ENCODE measurements at regions of chr16 and their contacts with region 1.

Region 1: GRCh38 chr16:58629572-58630104 is at the start of gene CNOT1:
- DNase-seq: peak; percentile 99
- H3K4me3 Mint-ChIP-seq: peak within 1 kb of the TSS; percentile 95
- H3K27ac Mint-ChIP-seq: peak within 1 kb of the TSS; percentile 100
- H3K4me1 Mint-ChIP-seq: peaks cover 25% of the 10 kb centered on the region
- H3K27me3 Mint-ChIP-seq: no peaks in the 10 kb centered on the region
- total RNA-seq, gene CNOT1: 264 and 266 TPM in 2 replicates

Region 2: DNA sequence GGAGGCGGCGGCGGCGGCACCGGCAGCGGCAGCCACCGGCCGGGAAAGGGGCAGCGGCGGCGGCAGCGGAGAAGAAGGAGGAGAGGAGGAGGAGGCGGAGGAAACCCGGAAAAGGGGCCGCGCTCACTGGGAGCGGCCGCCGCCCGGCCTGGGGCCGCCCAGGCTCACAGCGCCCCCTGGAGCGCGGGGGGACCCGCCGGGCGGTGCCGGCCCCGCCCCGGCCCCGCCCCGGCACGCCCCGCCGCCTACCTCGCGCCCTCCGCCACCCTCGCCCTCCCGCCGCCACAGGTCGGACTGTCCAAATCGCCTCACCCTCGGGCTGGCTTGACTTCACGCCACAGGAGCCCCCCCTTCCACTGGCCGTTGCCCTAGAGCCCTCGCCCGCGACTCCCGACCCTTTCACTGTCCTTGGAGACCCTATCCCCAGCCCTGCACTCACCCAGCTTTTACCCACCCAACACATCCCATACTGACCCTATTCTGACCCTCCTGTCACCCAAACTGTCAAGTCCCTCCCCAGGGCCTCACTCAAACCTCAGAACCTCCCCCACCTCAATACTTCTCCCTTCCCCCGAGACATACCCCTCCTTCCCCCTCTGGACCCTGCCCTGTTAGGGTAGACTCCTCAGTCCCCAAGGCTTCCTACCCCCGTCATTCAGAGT is 431.5 kb before region 1 on chr16 and contains the start of gene CSNK2A2:
- intact Hi-C with region 1: loop called (anchors 5 kb)
- DNase-seq: peak; percentile 63
- H3K4me3 Mint-ChIP-seq: peak within 1 kb of the TSS; percentile 84
- H3K27ac Mint-ChIP-seq: peak within 1 kb of the TSS; percentile 54
- H3K4me1 Mint-ChIP-seq: peaks cover 34% of the 10 kb centered on the region
- H3K27me3 Mint-ChIP-seq: peaks cover 12% of the 10 kb centered on the region
- total RNA-seq, gene CSNK2A2: 90.5 and 93.9 TPM in 2 replicates

Region 3: GRCh38 chr16:58392215-58393137 is 237.2 kb before region 1 on chr16 and contains the start of gene GINS3:
- intact Hi-C with region 1: loop called (anchors 1 kb)
- DNase-seq: peak; percentile 83
- H3K4me3 Mint-ChIP-seq: peak within 1 kb of the TSS; percentile 99
- H3K27ac Mint-ChIP-seq: peak within 1 kb of the TSS; percentile 96
- H3K4me1 Mint-ChIP-seq: peaks cover 13% of the 10 kb centered on the region
- H3K27me3 Mint-ChIP-seq: peaks cover 22% of the 10 kb centered on the region
- total RNA-seq, gene GINS3: 21.0 and 22.2 TPM in 2 replicates

Region 4: DNA sequence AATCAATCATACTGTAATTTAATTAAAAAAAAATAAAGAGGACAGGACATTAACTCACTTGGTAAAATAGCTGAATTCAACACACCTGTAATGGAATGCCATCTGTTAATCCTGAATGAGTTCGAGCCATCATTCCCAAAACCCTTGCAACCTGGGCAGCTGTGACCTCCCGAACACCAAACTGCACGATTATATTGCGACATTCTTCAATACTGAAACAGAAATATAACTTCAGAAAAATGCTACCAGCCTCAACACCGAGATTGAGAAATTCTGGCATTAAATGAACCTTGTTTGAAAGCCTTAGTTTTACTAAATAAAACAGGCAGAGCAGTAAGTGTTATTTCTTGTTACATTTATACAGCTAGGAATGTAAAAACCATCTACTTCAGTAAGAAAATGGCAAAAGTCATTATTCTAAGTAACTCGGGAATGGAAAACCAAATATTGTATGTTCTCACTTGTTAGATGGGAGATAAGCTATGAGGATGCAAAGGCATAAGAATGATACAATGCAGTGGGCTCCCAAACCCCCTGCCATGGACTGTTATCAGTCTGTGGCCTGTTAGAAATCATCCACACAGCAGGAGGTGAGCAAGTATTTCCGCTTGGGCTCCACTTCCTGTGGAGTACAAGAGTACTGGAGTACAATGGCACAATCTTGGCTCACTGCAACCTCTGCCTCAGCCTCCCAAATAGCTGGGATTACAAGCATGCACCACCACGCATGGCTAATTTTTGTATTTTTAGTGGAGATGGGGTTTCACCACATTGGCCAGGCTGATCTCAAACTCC is 46.5 kb before region 1 on chr16:
- intact Hi-C with region 1: loop called (anchors 5 kb)
- DNase-seq: no peak
- H3K4me3 Mint-ChIP-seq: no peak overlapping the region
- H3K27ac Mint-ChIP-seq: no peak overlapping the region
- H3K4me1 Mint-ChIP-seq: peaks cover 7% of the 10 kb centered on the region
- H3K27me3 Mint-ChIP-seq: no peaks in the 10 kb centered on the region

Region 5: GRCh38 chr16:58733671-58734458 is 104.2 kb after region 1 on chr16 and contains the start of gene GOT2:
- intact Hi-C with region 1: loop called (anchors 1 kb)
- DNase-seq: peak; percentile 76
- H3K4me3 Mint-ChIP-seq: peak within 1 kb of the TSS; percentile 99
- H3K27ac Mint-ChIP-seq: peak within 1 kb of the TSS; percentile 98
- H3K4me1 Mint-ChIP-seq: peaks cover 25% of the 10 kb centered on the region
- H3K27me3 Mint-ChIP-seq: peaks cover 2% of the 10 kb centered on the region
- total RNA-seq, gene GOT2: 121 and 123 TPM in 2 replicates

Region 6: GRCh38 chr16:58828901-58829545 is 199.4 kb after region 1 on chr16:
- intact Hi-C with region 1: no loop called
- DNase-seq: no peak
- H3K4me3 Mint-ChIP-seq: no peak overlapping the region
- H3K27ac Mint-ChIP-seq: no peak overlapping the region
- H3K4me1 Mint-ChIP-seq: no peaks in the 10 kb centered on the region
- H3K27me3 Mint-ChIP-seq: no peaks in the 10 kb centered on the region

Region 7: DNA sequence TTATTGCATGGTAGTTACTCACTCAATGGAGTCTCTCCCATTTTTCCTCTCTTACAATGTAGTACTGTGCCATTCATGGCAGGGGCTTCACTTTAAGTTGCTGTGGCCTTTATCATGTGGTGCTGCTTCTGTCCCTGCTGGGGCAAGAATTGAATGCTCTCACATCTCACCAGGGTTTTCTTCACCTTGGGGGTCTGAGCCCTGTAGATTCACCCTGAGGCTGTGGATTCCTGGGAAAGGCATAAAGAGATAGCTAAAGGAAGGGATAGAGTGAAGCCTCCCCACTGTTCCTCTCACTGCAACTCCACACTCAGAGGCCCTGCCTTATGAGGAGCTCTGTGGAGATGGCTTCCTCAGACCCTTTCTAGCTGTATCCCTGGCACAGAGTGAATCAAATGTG is 282.9 kb after region 1 on chr16:
- intact Hi-C with region 1: no loop called
- DNase-seq: no peak
- H3K4me3 Mint-ChIP-seq: no peak overlapping the region
- H3K27ac Mint-ChIP-seq: no peak overlapping the region
- H3K4me1 Mint-ChIP-seq: no peaks in the 10 kb centered on the region
- H3K27me3 Mint-ChIP-seq: no peaks in the 10 kb centered on the region

Measured in activated T-helper 2 cell treated with anti-CD3 and anti-CD28 coated beads, Interferon-gamma antibody, Interleukin-2, Interleukin-4, amounts not matched to agents 10 μg/mL and 5 μg/mL and 100 μg/mL, durations not matched to agents 14 hours and 24 hours and 36 hours (primary cell).